Natural killer cell (primary cell): ENCODE measurements at regions of chr6 and their contacts with region 1.

Region 1: DNA sequence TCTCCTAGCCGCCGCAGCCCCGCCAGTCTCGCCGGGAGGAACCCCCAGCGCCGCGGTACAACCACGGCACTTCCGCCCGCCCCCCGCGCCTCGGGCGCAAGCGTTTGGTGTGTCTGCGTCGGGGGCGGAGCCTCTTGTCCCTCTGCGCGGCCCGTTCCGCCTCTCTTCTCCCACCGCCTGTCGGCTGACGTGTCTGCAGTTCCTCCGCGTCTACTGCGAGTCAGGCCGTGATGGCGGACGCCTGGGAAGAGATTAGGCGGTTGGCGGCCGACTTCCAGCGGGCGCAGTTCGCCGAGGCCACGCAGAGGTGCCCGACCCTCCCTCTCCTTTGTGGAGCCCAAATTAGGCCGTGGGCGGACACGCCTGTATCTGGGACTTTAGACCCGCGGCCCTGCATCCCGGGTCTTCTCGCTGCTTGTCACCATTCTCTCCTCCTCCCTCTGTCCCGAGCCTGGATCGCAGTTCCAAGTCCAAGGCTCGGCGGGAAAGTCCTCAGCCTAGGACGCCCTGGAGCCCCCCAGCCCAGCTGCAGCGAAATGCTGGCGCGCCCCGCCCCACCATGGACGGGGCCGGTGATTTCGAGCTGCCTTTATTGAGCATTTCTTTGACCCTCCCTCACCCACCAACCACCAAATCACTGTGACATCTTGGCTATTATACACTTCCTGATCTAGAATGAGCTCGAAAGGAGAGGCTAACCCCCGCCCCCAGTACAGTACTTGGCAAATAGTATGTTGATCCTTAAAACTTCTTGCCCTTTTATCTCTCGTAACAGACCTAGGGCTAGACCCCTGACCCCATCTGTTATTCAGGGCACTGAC is at the start of gene UFL1:
- DNase-seq: peak; percentile 89 to 97
- ATAC-seq: peak; percentile 93 to 98 (median 94)
- H3K4me3 ChIP-seq: peak within 1 kb of the TSS; percentile 90
- H3K4me3 Mint-ChIP-seq: peak within 1 kb of the TSS; percentile 98
- H3K27ac ChIP-seq: peak within 1 kb of the TSS; percentile 97
- H3K27ac Mint-ChIP-seq: peak within 1 kb of the TSS; percentile 98 to 99
- H3K4me1 ChIP-seq: peaks cover 9% of the 10 kb centered on the region
- H3K4me1 Mint-ChIP-seq: peaks cover 14 to 35% of the 10 kb centered on the region in 2 donors
- H3K27me3 ChIP-seq: no peaks in the 10 kb centered on the region
- H3K27me3 Mint-ChIP-seq: no peaks in the 10 kb centered on the region
- CTCF ChIP-seq: no peak
- total RNA-seq, gene UFL1: 18.4 to 20.7 (median 19.0) TPM

Region 2: GRCh38 chr6:95577304-95578105 is 944.3 kb before region 1 on chr6 and contains the start of gene MANEA:
- intact Hi-C with region 1: loop called (anchors 5 kb)
- DNase-seq: peak; percentile 79 to 89
- ATAC-seq: peak; percentile 83 to 94 (median 87)
- H3K4me3 ChIP-seq: peak within 1 kb of the TSS; percentile 76
- H3K4me3 Mint-ChIP-seq: peak within 1 kb of the TSS; percentile 97
- H3K27ac ChIP-seq: peak within 1 kb of the TSS; percentile 93
- H3K27ac Mint-ChIP-seq: peak within 1 kb of the TSS; percentile 97 to 99
- H3K4me1 ChIP-seq: peaks cover 4% of the 10 kb centered on the region
- H3K4me1 Mint-ChIP-seq: peaks cover 35% of the 10 kb centered on the region in 2 donors
- H3K27me3 ChIP-seq: no peaks in the 10 kb centered on the region
- H3K27me3 Mint-ChIP-seq: no peaks in the 10 kb centered on the region
- CTCF ChIP-seq: no peak
- total RNA-seq, gene MANEA: 4.7 to 10.6 (median 5.7) TPM

Region 3: GRCh38 chr6:96499781-96500180 is 22.1 kb before region 1 on chr6:
- intact Hi-C with region 1: loop called (anchors 1 kb)
- DNase-seq: peak in 1 of 2 donors; percentile 76
- ATAC-seq: peak; percentile 69 to 73 (median 70)
- H3K4me3 ChIP-seq: no peak overlapping the region
- H3K4me3 Mint-ChIP-seq: no peak overlapping the region
- H3K27ac ChIP-seq: no peak overlapping the region
- H3K27ac Mint-ChIP-seq: peak overlapping the region in 1 of 2 donors; percentile 7
- H3K4me1 ChIP-seq: peaks cover 11% of the 10 kb centered on the region
- H3K4me1 Mint-ChIP-seq: peaks cover 30 to 32% of the 10 kb centered on the region in 2 donors
- H3K27me3 ChIP-seq: no peaks in the 10 kb centered on the region
- H3K27me3 Mint-ChIP-seq: no peaks in the 10 kb centered on the region
- CTCF ChIP-seq: no peak

Region 4: GRCh38 chr6:96897383-96898240 is 375.8 kb after region 1 on chr6 and contains the start of gene NDUFAF4:
- intact Hi-C with region 1: loop called (anchors 1 kb)
- DNase-seq: peak; percentile 92 to 97
- ATAC-seq: peak; percentile 92 to 98 (median 94)
- H3K4me3 ChIP-seq: peak within 1 kb of the TSS; percentile 85
- H3K4me3 Mint-ChIP-seq: peak within 1 kb of the TSS; percentile 92
- H3K27ac ChIP-seq: peak within 1 kb of the TSS; percentile 90
- H3K27ac Mint-ChIP-seq: peak within 1 kb of the TSS; percentile 85 to 91
- H3K4me1 ChIP-seq: peaks cover 5% of the 10 kb centered on the region
- H3K4me1 Mint-ChIP-seq: peaks cover 18 to 19% of the 10 kb centered on the region in 2 donors
- H3K27me3 ChIP-seq: no peaks in the 10 kb centered on the region
- H3K27me3 Mint-ChIP-seq: peaks cover 10 to 13% of the 10 kb centered on the region in 2 donors
- CTCF ChIP-seq: peak; percentile 86
- total RNA-seq, gene NDUFAF4: 23.8 to 30.9 (median 29.8) TPM

Region 5: DNA sequence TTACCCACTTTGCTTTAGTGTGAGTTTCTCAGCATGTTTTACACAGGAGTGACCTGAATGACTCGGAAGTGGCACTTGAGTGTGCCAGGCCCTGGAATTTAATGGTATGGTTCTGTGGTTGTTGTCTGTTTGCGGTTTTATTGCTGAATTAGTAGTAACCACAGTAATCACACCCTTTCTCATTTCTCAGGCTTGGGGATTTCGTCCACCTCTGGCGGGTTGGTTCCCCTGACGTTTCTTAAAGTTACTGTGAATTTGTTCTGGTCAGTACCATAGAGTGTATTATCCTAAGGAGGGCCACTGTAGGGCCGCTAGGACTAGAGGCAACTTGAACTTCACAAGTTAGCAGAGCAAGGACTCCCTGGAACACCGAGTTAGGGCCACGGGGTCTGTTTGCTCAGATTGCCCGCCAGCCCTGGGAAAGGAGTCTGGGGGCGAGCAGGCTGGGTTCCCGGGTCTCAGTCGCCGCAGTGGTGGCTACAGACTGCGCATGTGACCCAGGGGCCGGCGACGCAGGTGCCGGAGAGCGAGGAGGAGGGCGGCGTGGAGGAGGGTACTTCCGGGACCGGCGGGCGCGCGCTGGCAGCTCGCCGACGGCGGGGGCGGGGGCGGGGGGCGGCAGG is 402.1 kb after region 1 on chr6:
- intact Hi-C with region 1: loop called (anchors 1 kb)
- DNase-seq: peak in 1 of 2 donors; percentile 74
- ATAC-seq: peak; percentile 33 to 55 (median 52)
- H3K4me3 ChIP-seq: peak overlapping the region; percentile 65
- H3K4me3 Mint-ChIP-seq: peak overlapping the region; percentile 94
- H3K27ac ChIP-seq: peak overlapping the region; percentile 98
- H3K27ac Mint-ChIP-seq: peak overlapping the region; percentile 94 to 96
- H3K4me1 ChIP-seq: peaks cover 14% of the 10 kb centered on the region
- H3K4me1 Mint-ChIP-seq: peaks cover 23 to 32% of the 10 kb centered on the region in 2 donors
- H3K27me3 ChIP-seq: no peaks in the 10 kb centered on the region
- H3K27me3 Mint-ChIP-seq: peaks cover 10 to 29% of the 10 kb centered on the region in 2 donors
- CTCF ChIP-seq: no peak